SK-N-SH (cell line): ENCODE measurements at regions of chr5 and their contacts with region 1.

Region 1: DNA sequence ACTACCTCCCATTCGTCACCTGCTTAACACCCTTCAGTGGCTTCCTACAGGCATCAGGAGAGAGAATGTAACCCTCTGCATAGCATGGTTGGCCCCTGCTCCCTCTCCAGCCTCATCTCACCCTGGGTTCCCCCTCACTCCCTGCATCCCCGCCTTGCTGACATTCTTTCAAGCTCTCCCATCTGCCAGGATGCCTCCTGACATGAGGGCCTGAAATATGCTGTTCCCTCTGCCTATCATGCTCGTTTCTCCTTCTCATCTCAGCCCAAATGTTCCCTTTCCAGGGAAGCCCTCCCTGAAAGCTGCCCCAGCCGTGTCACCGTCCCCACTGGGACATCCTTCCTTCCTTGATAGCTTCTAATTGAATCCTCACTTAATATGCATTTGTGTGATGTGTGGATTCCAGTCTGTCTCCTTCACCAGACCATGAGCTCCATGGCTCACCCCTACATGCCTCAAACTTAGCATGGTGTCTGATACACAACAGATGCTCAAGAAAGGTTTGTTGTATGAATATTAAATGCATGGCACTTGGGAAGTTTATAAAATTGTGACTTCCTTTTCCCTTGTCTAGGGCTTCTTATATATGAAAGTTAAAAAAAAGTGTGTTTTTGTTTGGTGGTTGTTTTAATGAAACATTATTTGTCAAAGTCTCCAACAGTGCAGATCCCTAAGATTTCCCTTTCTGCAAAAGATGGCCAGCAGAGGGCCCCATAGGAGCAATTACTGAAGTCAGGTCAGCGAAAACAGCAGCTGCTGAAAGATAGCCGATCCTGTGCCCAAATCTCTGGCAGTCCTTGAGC is 7.3 kb upstream of the C5orf58 start:
- DNase-seq: peak; percentile 70
- H3K4me3 ChIP-seq: no peak overlapping the region; a peak in 1 of 4 replicates
- H3K27ac ChIP-seq: peak overlapping the region in 1 of 2 experiments; percentile 65; a peak in 2 of 4 replicates
- H3K4me1 ChIP-seq: peaks cover 3 to 21% of the 10 kb centered on the region in 2 experiments; a peak in 2 of 4 replicates
- H3K27me3 ChIP-seq: no peaks in the 10 kb centered on the region
- CTCF ChIP-seq: peak; percentile 89
- EP300 ChIP-seq: no peak
- RAD21 ChIP-seq: peak; percentile 93

Region 2: DNA sequence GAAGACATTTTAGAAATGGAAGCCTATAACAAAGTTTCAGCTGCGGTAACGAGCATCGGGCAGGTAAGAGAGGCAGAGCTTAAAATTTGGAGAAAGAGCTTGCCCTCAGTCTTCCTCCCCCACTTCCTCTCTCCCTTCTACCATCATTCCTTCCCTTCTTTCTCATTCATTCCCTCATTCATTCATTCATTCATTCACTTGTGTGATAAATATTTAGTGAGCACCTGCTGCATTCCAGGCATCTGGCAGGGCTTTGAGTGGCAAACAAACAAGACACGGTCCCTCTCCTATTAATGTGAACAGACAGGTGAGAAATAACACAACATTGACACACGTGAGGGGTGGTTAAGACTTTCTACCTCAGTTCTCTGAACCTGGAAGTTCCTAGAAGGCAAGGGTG is 49.6 kb before region 1 on chr5:
- CTCF ChIA-PET with region 1: no interaction called
- POLR2A ChIA-PET with region 1: no interaction called
- DNase-seq: no peak
- H3K4me3 ChIP-seq: no peak overlapping the region
- H3K27ac ChIP-seq: no peak overlapping the region
- H3K4me1 ChIP-seq: peaks cover 0 to 6% of the 10 kb centered on the region in 2 experiments; a peak in 1 of 4 replicates
- H3K27me3 ChIP-seq: no peaks in the 10 kb centered on the region
- CTCF ChIP-seq: no peak
- EP300 ChIP-seq: no peak
- RAD21 ChIP-seq: no peak

Region 3: GRCh38 chr5:170235876-170236864 is 10.6 kb after region 1 on chr5:
- CTCF ChIA-PET with region 1: interaction called, 41 read pairs
- POLR2A ChIA-PET with region 1: no interaction called
- DNase-seq: no peak
- H3K4me3 ChIP-seq: no peak overlapping the region
- H3K27ac ChIP-seq: no peak overlapping the region
- H3K4me1 ChIP-seq: no peaks in the 10 kb centered on the region
- H3K27me3 ChIP-seq: no peaks in the 10 kb centered on the region; the same call in 1 of the 2 replicates
- CTCF ChIP-seq: no peak
- EP300 ChIP-seq: no peak
- RAD21 ChIP-seq: no peak

Region 4: GRCh38 chr5:170267431-170268152 is 42.1 kb after region 1 on chr5:
- CTCF ChIA-PET with region 1: interaction called, 36 read pairs
- POLR2A ChIA-PET with region 1: no interaction called
- DNase-seq: peak; percentile 84
- H3K4me3 ChIP-seq: peak overlapping the region in 1 of 2 experiments; percentile 53; a peak in 2 of 4 replicates
- H3K27ac ChIP-seq: no peak overlapping the region
- H3K4me1 ChIP-seq: peaks cover 0 to 10% of the 10 kb centered on the region in 2 experiments; a peak in 1 of 4 replicates
- H3K27me3 ChIP-seq: peaks cover 3% of the 10 kb centered on the region; the same call in 1 of the 2 replicates
- CTCF ChIP-seq: peak; percentile 85
- EP300 ChIP-seq: no peak
- RAD21 ChIP-seq: peak; percentile 76

Region 5: DNA sequence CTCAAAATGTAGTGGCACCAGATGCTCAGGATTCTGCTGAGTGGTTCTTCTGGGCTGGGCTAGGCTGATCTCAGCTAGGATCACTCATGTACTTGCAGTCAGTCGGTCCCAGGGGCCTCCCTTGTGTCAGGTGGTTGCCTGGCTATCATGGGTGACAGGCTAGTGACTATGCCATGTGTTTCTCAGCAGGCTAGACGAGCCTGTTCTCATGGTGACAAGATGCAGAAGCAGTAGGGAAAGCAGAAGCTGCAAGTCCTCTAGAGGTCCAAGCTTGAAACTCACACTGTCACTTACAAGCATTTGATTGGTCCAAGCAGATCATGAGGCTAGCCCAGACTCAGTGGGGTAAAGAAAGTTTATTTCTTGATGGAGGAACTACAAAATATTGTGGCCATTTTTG is 178.9 kb after region 1 on chr5:
- CTCF ChIA-PET with region 1: interaction called, 30 read pairs
- POLR2A ChIA-PET with region 1: no interaction called
- DNase-seq: no peak
- H3K4me3 ChIP-seq: no peak overlapping the region
- H3K27ac ChIP-seq: no peak overlapping the region
- H3K4me1 ChIP-seq: peaks cover 0 to 11% of the 10 kb centered on the region in 2 experiments; a peak in 1 of 4 replicates
- H3K27me3 ChIP-seq: no peaks in the 10 kb centered on the region
- CTCF ChIP-seq: no peak
- EP300 ChIP-seq: no peak
- RAD21 ChIP-seq: no peak

Region 6: GRCh38 chr5:170434966-170435605 is 209.6 kb after region 1 on chr5:
- CTCF ChIA-PET with region 1: interaction called, 23 read pairs
- POLR2A ChIA-PET with region 1: no interaction called
- DNase-seq: peak; percentile 85
- H3K4me3 ChIP-seq: peak overlapping the region in 1 of 2 experiments; percentile 38; a peak in 1 of 4 replicates
- H3K27ac ChIP-seq: no peak overlapping the region
- H3K4me1 ChIP-seq: peaks cover 0 to 8% of the 10 kb centered on the region in 2 experiments; a peak in 1 of 4 replicates
- H3K27me3 ChIP-seq: no peaks in the 10 kb centered on the region
- CTCF ChIP-seq: peak; percentile 97
- EP300 ChIP-seq: no peak
- RAD21 ChIP-seq: peak; percentile 95